Activated CD4-positive, alpha-beta memory T cell treated with anti-CD3 and anti-CD28 coated beads, Interleukin-2, amount 10 ng/mL, durations not matched to agents 7 days and 5 days (primary cell): ENCODE measurements at regions of chr5 and their contacts with region 1.

Region 1: DNA sequence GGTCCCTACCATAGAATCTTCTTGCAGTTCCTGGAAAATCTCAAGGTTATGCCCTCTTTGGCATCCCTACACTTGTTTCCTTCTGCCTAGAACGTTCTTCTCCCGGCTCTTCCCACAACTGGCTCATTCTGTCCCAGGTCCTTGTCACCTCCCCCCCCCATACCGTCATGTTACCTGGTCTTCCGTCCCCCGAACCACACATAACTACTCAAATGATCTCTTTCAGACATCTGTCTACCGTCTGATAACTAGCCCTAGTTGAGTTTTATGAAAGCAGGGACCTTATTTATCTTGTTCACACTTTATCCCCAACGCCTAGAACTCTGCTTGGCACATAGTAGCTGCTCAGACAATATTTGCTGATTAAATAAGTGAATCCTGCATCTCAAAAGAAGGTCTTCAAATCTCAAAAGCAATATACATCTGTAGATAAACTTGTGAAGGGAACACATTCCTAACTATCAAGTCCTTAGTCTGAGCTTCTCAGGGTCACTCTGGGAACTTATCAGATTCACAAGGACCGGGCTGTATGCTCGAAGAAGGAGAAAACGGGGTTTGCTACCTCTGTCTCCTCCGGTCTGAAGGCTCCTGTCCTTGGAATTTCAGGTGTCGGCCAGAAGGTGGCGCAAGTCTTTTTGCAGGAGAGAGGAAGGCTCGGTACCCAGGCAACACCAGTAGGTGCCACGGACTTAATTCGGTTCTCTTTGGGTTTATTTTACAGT is 30.0 kb downstream of the LCP2 start:
- DNase-seq: peak; percentile 84
- H3K4me3 Mint-ChIP-seq: peak overlapping the region; percentile 52
- H3K27ac Mint-ChIP-seq: peak overlapping the region; percentile 90
- H3K4me1 Mint-ChIP-seq: peaks cover 91% of the 10 kb centered on the region
- H3K27me3 Mint-ChIP-seq: no peaks in the 10 kb centered on the region

Region 2: DNA sequence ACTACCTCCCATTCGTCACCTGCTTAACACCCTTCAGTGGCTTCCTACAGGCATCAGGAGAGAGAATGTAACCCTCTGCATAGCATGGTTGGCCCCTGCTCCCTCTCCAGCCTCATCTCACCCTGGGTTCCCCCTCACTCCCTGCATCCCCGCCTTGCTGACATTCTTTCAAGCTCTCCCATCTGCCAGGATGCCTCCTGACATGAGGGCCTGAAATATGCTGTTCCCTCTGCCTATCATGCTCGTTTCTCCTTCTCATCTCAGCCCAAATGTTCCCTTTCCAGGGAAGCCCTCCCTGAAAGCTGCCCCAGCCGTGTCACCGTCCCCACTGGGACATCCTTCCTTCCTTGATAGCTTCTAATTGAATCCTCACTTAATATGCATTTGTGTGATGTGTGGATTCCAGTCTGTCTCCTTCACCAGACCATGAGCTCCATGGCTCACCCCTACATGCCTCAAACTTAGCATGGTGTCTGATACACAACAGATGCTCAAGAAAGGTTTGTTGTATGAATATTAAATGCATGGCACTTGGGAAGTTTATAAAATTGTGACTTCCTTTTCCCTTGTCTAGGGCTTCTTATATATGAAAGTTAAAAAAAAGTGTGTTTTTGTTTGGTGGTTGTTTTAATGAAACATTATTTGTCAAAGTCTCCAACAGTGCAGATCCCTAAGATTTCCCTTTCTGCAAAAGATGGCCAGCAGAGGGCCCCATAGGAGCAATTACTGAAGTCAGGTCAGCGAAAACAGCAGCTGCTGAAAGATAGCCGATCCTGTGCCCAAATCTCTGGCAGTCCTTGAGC is 42.1 kb before region 1 on chr5:
- CTCF ChIA-PET with region 1: interaction called, 16 read pairs
- POLR2A ChIA-PET with region 1: no interaction called
- DNase-seq: peak; percentile 80
- H3K4me3 Mint-ChIP-seq: no peak overlapping the region
- H3K27ac Mint-ChIP-seq: no peak overlapping the region
- H3K4me1 Mint-ChIP-seq: peaks cover 3% of the 10 kb centered on the region
- H3K27me3 Mint-ChIP-seq: no peaks in the 10 kb centered on the region

Region 3: DNA sequence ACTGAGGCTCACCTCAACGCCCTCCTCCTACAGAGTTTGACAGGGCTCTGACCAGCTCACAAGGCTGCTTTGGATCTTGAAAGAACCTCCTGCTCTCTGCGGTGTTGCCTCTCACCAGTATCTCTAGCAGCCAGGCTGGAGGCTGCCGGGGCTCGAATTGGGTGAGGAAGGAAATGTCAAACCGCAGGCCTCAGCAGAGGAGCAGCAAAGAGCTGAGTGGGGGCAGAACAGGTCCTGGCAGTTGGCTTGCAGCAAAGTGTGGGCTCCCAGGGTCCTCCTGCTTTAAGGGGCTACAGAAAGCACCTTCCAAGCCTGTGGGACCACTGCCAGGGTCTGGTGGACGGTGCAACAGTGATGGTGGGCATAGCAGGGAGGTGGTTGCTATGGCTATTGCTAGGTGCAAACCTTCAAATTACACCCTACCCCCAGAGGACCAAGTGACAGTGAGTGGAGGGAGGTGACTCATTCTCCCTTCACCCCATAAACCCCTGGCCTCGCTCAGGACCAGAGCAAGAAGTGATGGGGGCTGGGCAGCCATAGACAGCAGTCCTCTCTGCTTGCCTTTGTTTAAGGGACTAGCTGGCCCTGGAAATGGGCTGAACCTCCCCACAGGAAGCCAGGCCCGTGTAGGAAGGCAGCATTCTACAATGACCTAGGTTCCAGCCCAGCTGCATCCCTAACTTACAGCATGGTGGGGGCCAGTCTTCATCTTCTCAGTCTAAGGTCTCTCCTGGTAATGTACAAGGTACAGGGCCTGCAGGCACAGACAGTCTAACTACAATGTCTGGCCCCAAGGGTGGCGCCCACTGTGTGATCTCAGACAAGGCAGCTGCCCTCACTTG is 11.2 kb after region 1 on chr5:
- CTCF ChIA-PET with region 1: interaction called, 62 read pairs
- POLR2A ChIA-PET with region 1: interaction called, 1,149 read pairs
- DNase-seq: peak; percentile 94
- H3K4me3 Mint-ChIP-seq: peak overlapping the region; percentile 69
- H3K27ac Mint-ChIP-seq: peak overlapping the region; percentile 97
- H3K4me1 Mint-ChIP-seq: peaks cover 97% of the 10 kb centered on the region
- H3K27me3 Mint-ChIP-seq: no peaks in the 10 kb centered on the region

Region 4: GRCh38 chr5:170293273-170293672 is 25.7 kb after region 1 on chr5:
- CTCF ChIA-PET with region 1: interaction called, 371 read pairs
- POLR2A ChIA-PET with region 1: interaction called, 1,149 read pairs
- DNase-seq: peak; percentile 80
- H3K4me3 Mint-ChIP-seq: peak overlapping the region; percentile 99
- H3K27ac Mint-ChIP-seq: peak overlapping the region; percentile 96
- H3K4me1 Mint-ChIP-seq: peaks cover 70% of the 10 kb centered on the region
- H3K27me3 Mint-ChIP-seq: no peaks in the 10 kb centered on the region

Region 5: GRCh38 chr5:170312666-170313065 is 45.1 kb after region 1 on chr5:
- CTCF ChIA-PET with region 1: interaction called, 17 read pairs
- POLR2A ChIA-PET with region 1: interaction called, 1,149 read pairs
- DNase-seq: peak; percentile 56
- H3K4me3 Mint-ChIP-seq: peak overlapping the region; percentile 52
- H3K27ac Mint-ChIP-seq: peak overlapping the region; percentile 79
- H3K4me1 Mint-ChIP-seq: peaks cover 30% of the 10 kb centered on the region
- H3K27me3 Mint-ChIP-seq: peaks cover 2% of the 10 kb centered on the region

Region 6: DNA sequence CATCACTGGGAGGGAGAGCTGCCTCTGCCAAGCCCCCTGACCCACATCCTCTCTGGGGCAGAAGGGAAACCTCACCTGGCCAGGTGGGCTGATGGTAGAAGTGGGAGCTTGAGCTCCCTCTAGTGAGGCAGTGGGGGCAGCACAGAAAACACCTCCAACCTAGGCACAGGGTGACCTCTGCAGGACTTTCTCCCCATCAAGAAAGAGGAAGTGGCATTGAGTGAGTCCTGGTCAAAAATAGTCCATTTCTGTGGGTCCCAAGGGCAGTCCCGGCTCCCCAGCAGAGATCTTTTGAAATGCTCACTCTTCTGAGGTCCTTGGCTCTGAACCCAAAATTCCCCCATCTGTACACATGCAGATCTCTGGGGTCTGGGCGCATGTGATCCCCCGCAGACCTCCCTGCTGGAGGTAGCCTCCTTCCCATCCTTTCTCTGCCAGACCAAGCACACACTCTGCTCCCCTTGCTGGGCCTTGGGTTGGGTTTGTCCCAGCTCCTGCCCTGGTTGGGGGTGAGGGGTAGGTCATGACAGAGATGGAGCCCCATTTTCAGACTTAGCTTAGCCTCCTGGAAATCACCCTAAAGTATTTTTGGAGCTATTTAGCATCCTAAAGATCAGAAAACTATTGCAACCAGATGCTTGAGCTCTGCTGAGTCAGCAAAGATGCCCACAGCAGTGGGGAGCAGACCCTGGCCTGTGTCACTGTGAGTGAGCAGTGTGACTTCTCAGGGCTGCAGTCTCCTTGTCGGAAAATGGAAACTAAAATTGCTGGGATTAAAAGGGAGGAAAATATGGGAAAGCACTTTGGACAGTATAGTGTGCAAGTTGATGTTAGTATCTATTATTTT is 71.6 kb after region 1 on chr5:
- CTCF ChIA-PET with region 1: interaction called, 129 read pairs
- POLR2A ChIA-PET with region 1: interaction called, 290 read pairs
- DNase-seq: peak; percentile 74
- H3K4me3 Mint-ChIP-seq: no peak overlapping the region
- H3K27ac Mint-ChIP-seq: no peak overlapping the region
- H3K4me1 Mint-ChIP-seq: peaks cover 33% of the 10 kb centered on the region
- H3K27me3 Mint-ChIP-seq: no peaks in the 10 kb centered on the region

Region 7: DNA sequence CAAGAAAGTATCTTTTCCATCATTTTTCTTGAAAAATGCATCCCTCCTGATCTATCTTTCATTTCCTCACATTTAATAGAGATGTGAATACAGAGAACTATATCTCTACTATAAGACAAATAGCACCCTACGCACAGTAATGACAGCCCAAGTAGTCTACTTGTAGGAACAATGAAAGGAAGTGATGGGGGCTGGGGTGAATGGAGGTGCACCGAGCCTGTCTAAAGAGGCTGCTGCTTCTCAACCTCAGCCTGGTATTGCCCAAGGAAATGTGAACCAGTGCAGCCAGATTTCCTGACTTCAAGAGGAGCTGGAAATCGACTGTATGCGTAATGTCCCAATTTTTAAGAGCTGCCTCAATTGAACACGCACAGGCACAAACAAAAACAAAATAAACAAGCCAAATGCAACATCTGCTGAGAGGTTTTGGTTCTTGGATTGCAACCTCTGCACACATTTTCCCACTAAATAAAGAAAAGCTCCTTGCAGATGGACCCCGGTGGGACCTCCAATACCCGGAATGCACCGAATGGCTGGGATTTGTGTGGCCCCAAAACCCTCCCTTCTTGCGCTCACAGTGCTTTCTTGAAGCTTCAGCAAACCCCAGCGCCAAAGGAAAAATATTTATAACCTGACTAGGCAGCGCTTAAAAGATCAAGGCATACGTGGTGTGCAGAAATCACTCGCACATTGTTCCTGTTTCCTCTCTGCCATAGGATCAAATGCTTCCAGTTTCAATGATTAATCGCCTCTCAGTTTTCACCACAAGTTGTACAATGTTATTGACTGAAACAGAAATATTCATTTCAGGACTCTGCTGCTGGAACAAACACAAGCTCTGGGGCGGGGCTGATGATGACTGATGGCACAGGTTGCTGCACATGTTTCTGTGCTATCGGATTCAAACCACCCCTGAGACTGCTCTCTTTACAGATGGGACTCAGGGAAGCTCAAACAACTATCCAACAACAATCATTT is 304.6 kb after region 1 on chr5:
- CTCF ChIA-PET with region 1: no interaction called
- POLR2A ChIA-PET with region 1: no interaction called
- DNase-seq: peak; percentile 52
- H3K4me3 Mint-ChIP-seq: no peak overlapping the region
- H3K27ac Mint-ChIP-seq: no peak overlapping the region
- H3K4me1 Mint-ChIP-seq: peaks cover 19% of the 10 kb centered on the region
- H3K27me3 Mint-ChIP-seq: peaks cover 50% of the 10 kb centered on the region